Caco-2 (cell line): ENCODE measurements at regions of chr12 and their contacts with region 1.

Region 1: DNA sequence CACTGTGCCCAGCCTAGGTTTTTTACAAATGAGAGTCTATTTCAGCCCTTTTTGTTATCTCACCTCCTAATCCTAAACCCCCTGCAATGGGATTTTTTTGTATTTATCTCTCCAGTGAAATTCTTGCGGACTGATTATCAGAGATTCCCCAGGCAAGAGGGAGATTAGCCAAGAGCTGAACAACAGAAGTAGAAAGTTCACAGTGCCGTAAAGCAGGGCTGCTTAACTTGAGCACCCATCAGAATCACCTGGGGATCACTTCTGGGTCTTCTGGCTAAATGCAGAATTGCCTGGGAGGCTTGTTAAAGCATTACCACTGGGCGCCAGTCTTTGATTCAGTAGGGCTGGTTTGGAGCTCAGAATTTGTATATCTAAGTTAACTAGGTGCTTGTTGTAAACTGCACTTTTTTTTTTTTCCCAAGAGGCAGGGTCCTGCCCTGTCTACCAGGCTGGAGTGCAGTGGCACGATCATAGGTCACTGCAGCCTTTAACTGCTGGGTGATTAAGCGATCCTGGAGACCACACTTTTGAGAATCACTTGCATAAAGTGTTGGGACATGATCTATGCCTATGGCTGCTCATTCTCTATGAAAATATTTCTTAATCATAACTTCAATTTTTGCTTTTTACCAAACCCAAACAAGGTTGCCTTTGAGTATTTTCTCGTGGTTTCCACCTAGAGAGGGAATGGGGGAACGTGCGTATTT is 1.1 kb upstream of the DPPA3 start:
- DNase-seq: peak; percentile 83 to 86
- H3K4me3 ChIP-seq: no peak overlapping the region
- H3K4me3 Mint-ChIP-seq: peak overlapping the region; percentile 81
- H3K27ac Mint-ChIP-seq: peak overlapping the region; percentile 96
- H3K4me1 ChIP-seq: peaks cover 50% of the 10 kb centered on the region
- H3K4me1 Mint-ChIP-seq: peaks cover 54% of the 10 kb centered on the region
- H3K27me3 ChIP-seq: no peaks in the 10 kb centered on the region
- H3K27me3 Mint-ChIP-seq: no peaks in the 10 kb centered on the region
- CTCF ChIP-seq: no peak

Region 2: GRCh38 chr12:7678738-7679137 is 31.4 kb before region 1 on chr12:
- CTCF ChIA-PET with region 1: interaction called, 7 read pairs
- POLR2A ChIA-PET with region 1: interaction called, 3 read pairs
- intact Hi-C with region 1: loop called (anchors 1 kb)
- DNase-seq: peak; percentile 67 to 68
- H3K4me3 ChIP-seq: no peak overlapping the region
- H3K4me3 Mint-ChIP-seq: no peak overlapping the region
- H3K27ac Mint-ChIP-seq: peak overlapping the region; percentile 11
- H3K4me1 ChIP-seq: peaks cover 30% of the 10 kb centered on the region
- H3K4me1 Mint-ChIP-seq: peaks cover 23% of the 10 kb centered on the region
- H3K27me3 ChIP-seq: no peaks in the 10 kb centered on the region
- H3K27me3 Mint-ChIP-seq: no peaks in the 10 kb centered on the region
- CTCF ChIP-seq: peak in 1 of 2 experiments; percentile 43

Region 3: GRCh38 chr12:7806863-7807487 is 96.9 kb after region 1 on chr12:
- CTCF ChIA-PET with region 1: interaction called, 28 read pairs
- POLR2A ChIA-PET with region 1: interaction called, 5 read pairs
- intact Hi-C with region 1: loop called (anchors 2 kb)
- DNase-seq: peak; percentile 88 to 95
- H3K4me3 ChIP-seq: no peak overlapping the region
- H3K4me3 Mint-ChIP-seq: no peak overlapping the region
- H3K27ac Mint-ChIP-seq: peak overlapping the region; percentile 73
- H3K4me1 ChIP-seq: peaks cover 7% of the 10 kb centered on the region
- H3K4me1 Mint-ChIP-seq: peaks cover 21% of the 10 kb centered on the region
- H3K27me3 ChIP-seq: no peaks in the 10 kb centered on the region
- H3K27me3 Mint-ChIP-seq: no peaks in the 10 kb centered on the region
- CTCF ChIP-seq: peak; percentile 98 to 99

Region 4: GRCh38 chr12:7832059-7832696 is 122.1 kb after region 1 on chr12:
- CTCF ChIA-PET with region 1: interaction called, 12 read pairs
- POLR2A ChIA-PET with region 1: interaction called, 11 read pairs
- intact Hi-C with region 1: loop called (anchors 1 kb)
- DNase-seq: peak; percentile 80 to 85
- H3K4me3 ChIP-seq: no peak overlapping the region
- H3K4me3 Mint-ChIP-seq: peak overlapping the region; percentile 1
- H3K27ac Mint-ChIP-seq: peak overlapping the region; percentile 60
- H3K4me1 ChIP-seq: peaks cover 61% of the 10 kb centered on the region
- H3K4me1 Mint-ChIP-seq: peaks cover 51% of the 10 kb centered on the region
- H3K27me3 ChIP-seq: no peaks in the 10 kb centered on the region
- H3K27me3 Mint-ChIP-seq: no peaks in the 10 kb centered on the region
- CTCF ChIP-seq: peak; percentile 73 to 86

Region 5: GRCh38 chr12:7853557-7853956 is 143.4 kb after region 1 on chr12:
- CTCF ChIA-PET with region 1: no interaction called
- POLR2A ChIA-PET with region 1: interaction called, 4 read pairs
- intact Hi-C with region 1: loop called (anchors 5 kb)
- DNase-seq: no peak
- H3K4me3 ChIP-seq: no peak overlapping the region
- H3K4me3 Mint-ChIP-seq: no peak overlapping the region
- H3K27ac Mint-ChIP-seq: peak overlapping the region; percentile 92
- H3K4me1 ChIP-seq: peaks cover 83% of the 10 kb centered on the region
- H3K4me1 Mint-ChIP-seq: peaks cover 69% of the 10 kb centered on the region
- H3K27me3 ChIP-seq: no peaks in the 10 kb centered on the region
- H3K27me3 Mint-ChIP-seq: no peaks in the 10 kb centered on the region
- CTCF ChIP-seq: no peak

Region 6: GRCh38 chr12:7995266-7995963 is 285.3 kb after region 1 on chr12:
- CTCF ChIA-PET with region 1: no interaction called
- POLR2A ChIA-PET with region 1: no interaction called
- intact Hi-C with region 1: loop called (anchors 5 kb)
- DNase-seq: peak; percentile 90 to 91
- H3K4me3 ChIP-seq: no peak overlapping the region
- H3K4me3 Mint-ChIP-seq: no peak overlapping the region
- H3K27ac Mint-ChIP-seq: no peak overlapping the region
- H3K4me1 ChIP-seq: peaks cover 46% of the 10 kb centered on the region
- H3K4me1 Mint-ChIP-seq: peaks cover 13% of the 10 kb centered on the region
- H3K27me3 ChIP-seq: no peaks in the 10 kb centered on the region
- H3K27me3 Mint-ChIP-seq: no peaks in the 10 kb centered on the region
- CTCF ChIP-seq: peak; percentile 73 to 94

Region 7: DNA sequence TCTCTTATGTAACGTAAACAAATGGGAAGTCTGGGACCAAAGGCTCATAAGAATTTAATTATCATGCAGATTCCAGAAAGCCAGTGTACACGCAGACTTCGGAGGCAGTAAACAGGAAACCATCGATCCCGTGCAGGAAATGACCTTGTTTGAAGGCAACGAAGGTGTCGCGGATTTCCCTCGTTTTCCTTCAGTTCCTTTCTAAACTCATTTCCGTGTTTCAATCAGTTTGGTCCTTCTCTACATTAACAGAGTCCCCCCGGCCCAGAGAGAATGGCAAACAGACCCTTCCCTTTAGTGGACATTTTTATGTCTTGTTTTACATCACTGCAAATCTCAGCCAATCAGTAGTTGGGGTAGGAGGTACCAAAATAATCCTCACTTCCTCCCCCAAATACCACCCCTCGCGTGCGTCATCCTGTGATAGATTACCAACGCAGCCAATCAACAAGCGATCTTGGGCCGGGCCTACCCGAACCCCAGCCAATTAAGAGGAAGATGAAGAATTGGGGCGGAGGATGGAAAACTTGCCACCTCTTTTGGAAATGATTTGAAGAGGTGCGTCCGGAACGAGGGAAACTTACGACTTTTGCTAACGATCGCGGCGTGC is 316.3 kb after region 1 on chr12:
- CTCF ChIA-PET with region 1: no interaction called
- POLR2A ChIA-PET with region 1: no interaction called
- intact Hi-C with region 1: loop called (anchors 1 kb)
- DNase-seq: peak; percentile 99 to 100
- H3K4me3 ChIP-seq: peak overlapping the region; percentile 92
- H3K4me3 Mint-ChIP-seq: peak overlapping the region; percentile 100
- H3K27ac Mint-ChIP-seq: peak overlapping the region; percentile 100
- H3K4me1 ChIP-seq: no peaks in the 10 kb centered on the region; the same call in 1 of the 2 replicates
- H3K4me1 Mint-ChIP-seq: peaks cover 14% of the 10 kb centered on the region
- H3K27me3 ChIP-seq: no peaks in the 10 kb centered on the region
- H3K27me3 Mint-ChIP-seq: no peaks in the 10 kb centered on the region
- CTCF ChIP-seq: no peak

Region 8: GRCh38 chr12:8475508-8476203 is 765.5 kb after region 1 on chr12:
- CTCF ChIA-PET with region 1: no interaction called
- POLR2A ChIA-PET with region 1: no interaction called
- intact Hi-C with region 1: no loop called
- DNase-seq: no peak
- H3K4me3 ChIP-seq: no peak overlapping the region
- H3K4me3 Mint-ChIP-seq: no peak overlapping the region
- H3K27ac Mint-ChIP-seq: no peak overlapping the region
- H3K4me1 ChIP-seq: no peaks in the 10 kb centered on the region
- H3K4me1 Mint-ChIP-seq: no peaks in the 10 kb centered on the region
- H3K27me3 ChIP-seq: 0 out of 2 replicates have a peak, but pooled peaks cover 1% of the 10 kb centered on the region
- H3K27me3 Mint-ChIP-seq: peaks cover 8% of the 10 kb centered on the region
- CTCF ChIP-seq: no peak